ENCODE measurements at regions of chr16 and their contacts with region 1.

Region 1: DNA sequence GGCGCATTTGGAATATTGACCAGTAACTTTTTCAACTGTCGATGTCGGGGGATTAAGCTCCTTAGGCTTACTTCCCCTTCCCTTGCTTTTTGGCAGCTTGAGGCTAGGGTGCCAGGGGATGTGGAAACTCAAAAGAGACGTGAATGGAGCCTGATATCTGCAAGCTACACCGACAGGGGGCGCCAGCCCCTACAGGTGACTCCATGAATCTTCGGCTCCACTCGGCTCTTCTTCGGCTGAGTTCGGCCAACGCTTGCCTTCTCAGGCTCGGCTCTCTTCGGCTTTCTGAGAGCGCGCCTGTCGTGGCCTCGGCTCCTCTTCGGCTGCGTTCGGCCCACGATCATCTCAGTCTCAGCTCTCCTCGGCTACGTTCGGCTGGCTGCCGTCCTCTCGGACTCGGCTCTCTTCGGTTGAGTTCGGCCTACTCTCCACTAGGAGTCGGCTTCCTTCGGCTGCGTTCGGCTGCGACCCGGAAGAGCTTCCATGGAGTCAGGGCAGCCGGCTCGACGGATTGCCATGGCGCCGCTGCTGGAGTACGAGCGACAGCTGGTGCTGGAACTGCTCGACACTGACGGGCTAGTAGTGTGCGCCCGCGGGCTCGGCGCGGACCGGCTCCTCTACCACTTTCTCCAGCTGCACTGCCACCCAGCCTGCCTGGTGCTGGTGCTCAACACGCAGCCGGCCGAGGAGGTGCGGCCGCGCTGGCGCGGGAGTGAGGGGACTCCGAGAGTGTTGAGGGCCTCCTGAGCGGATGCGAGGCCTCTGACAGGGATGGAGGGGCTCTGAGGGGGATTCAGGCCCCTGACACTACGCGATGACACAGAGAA is at the start of gene ERCC4:
- DNase-seq: peak; percentile 100
- ATAC-seq: peak; percentile 98 to 99
- total RNA-seq, gene ERCC4: 6.8 to 10.1 TPM

Region 2: DNA sequence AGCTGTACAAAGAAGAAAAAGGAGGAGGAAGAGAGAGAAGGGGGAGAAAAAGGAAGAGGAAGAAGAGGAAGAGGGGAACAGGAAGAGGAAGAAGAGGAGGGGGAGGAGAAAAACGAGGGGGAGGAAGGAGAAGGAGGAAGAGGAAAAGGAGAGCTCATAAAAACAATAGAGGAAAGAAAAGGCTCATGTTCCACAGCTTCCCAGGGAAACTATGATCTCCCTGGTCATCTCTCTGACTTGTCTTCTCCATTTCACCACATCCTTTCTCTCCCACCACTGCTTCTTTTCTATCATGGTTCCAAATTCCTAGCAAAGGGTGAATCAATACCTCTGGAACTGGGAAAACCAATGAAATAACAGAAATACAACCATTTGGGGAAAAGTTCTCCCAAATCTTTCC is 254.0 kb before region 1 on chr16:
- intact Hi-C with region 1: no loop called
- DNase-seq: no peak
- ATAC-seq: no peak

Region 3: DNA sequence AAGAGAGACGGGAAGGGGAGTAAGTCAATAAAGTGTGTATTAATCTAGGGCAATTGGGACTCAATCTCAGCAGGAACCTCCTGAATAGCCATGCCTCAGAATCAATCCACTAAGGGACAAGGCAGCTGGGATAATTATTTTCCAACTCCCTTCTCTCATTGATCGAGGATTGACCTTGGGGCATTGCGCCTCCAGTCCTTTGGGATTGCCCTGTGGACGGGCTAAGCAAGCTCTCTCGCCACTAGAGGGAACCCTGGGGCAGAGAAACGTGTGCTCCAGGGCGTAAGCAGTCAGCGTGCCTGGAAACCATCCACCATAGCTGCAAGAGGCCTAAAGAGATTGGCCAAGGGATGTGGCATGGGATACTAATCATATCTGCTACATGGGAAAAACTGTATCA is 53.8 kb before region 1 on chr16:
- intact Hi-C with region 1: loop called in 1 of 2 experiments (anchors 5 kb)
- DNase-seq: peak; percentile 85
- ATAC-seq: peak; percentile 95 to 97

Region 4: GRCh38 chr16:14186007-14186794 is 266.3 kb after region 1 on chr16:
- intact Hi-C with region 1: loop called (anchors 5 to 10 kb)
- DNase-seq: peak; percentile 43
- ATAC-seq: peak; percentile 81 to 82

Region 5: DNA sequence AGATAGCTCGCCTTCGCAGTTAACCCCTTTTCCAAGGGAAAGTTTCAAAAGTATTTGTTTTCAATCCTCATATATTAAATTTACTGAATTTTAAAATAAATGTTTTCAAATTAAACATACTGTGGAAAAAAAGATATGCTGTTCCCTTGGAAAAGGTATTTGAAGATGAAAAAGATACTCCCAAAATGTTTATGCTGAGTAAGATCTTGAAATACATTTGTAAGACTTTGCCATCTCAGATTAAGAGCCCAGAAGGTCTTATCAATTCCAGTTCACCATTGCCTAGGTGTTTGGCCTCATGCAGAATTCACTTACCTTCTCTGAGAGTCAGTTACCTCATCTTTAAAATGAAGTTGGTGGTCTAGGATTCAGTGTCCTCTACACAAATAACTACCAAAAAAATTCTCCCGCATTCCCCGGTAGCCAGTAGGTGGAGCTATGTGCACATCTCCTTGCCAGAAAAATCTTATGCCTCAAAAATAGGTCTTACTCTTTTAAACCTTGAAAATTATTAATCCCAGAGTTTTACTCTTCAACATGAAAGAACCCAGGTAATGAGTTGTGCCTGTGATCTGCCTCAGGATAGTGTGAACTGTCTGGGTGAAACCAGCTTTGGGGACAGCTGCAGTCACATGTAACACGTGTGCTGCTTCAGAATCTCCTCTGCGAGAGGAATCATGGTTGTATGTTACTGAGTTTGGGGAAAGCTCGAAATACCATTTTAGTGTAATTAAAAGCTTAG is 329.6 kb after region 1 on chr16:
- intact Hi-C with region 1: loop called (anchors 5 to 10 kb)
- DNase-seq: no peak
- ATAC-seq: no peak

Region 6: GRCh38 chr16:14529010-14529669 is 609.2 kb after region 1 on chr16:
- intact Hi-C with region 1: loop called in 1 of 2 experiments (anchors 5 kb)
- DNase-seq: peak; percentile 64
- ATAC-seq: peak; percentile 84 to 89

Measured in left cardiac atrium (tissue), 4 donors.